ENCODE measurements at regions of chr17 and their contacts with region 1.

Region 1: GRCh38 chr17:7897773-7898172 is 9.2 kb downstream of the CHD3 start:
- DNase-seq: no peak
- H3K4me3 ChIP-seq: no peak overlapping the region
- H3K27me3 ChIP-seq: no peaks in the 10 kb centered on the region
- CTCF ChIP-seq: peak; percentile 63

Region 2: DNA sequence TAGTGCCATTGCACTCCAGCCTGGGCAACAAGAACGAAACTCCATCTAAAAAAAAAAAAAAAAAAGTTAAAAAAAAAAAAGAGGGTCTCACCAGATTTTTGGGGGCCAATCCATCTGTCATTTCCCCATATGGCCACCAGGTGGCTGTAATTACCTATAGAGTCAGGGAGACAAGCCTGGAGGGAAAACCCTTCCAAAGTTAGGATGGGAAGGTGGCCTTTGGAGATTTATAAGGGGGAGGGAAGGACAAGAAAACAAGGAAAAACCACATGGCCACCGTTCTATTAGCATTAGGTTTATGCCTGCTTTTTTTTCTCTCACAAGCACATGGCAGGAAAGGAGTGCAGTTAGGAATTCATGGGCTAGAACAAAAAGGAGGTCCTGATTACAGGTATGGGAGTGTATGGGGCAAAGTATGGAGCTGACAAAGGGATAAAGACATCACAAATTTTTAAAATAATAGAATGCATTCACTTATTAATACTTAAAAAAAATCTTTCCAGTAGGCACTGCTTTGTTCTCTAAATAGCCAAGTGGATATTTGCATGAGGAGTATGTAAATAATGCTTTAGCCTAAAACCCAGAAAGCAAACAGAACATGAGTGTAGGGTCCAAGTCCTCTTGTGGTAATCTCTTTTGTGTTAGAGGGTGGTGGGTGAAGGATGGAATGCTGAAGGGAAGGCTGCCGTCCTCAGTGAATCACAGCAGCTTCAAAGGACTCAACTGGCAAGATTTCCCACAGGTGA is 34.9 kb before region 1 on chr17:
- CTCF ChIA-PET with region 1: interaction called, 60 read pairs
- POLR2A ChIA-PET with region 1: no interaction called
- DNase-seq: no peak
- H3K4me3 ChIP-seq: no peak overlapping the region
- H3K27me3 ChIP-seq: no peaks in the 10 kb centered on the region
- CTCF ChIP-seq: peak; percentile 63

Region 3: GRCh38 chr17:7915611-7916382 is 18.0 kb after region 1 on chr17 and contains the start of gene RNF227:
- CTCF ChIA-PET with region 1: interaction called, 48 read pairs
- POLR2A ChIA-PET with region 1: no interaction called
- DNase-seq: peak; percentile 82
- H3K4me3 ChIP-seq: peak within 1 kb of the TSS; percentile 52
- H3K27me3 ChIP-seq: no peaks in the 10 kb centered on the region
- CTCF ChIP-seq: no peak
- polyA plus RNA-seq, gene RNF227: 2.2 and 2.9 TPM in 2 replicates

Measured in BJ (cell line).